ENCODE measurements at regions of chr7 and their contacts with region 1.

Region 1: DNA sequence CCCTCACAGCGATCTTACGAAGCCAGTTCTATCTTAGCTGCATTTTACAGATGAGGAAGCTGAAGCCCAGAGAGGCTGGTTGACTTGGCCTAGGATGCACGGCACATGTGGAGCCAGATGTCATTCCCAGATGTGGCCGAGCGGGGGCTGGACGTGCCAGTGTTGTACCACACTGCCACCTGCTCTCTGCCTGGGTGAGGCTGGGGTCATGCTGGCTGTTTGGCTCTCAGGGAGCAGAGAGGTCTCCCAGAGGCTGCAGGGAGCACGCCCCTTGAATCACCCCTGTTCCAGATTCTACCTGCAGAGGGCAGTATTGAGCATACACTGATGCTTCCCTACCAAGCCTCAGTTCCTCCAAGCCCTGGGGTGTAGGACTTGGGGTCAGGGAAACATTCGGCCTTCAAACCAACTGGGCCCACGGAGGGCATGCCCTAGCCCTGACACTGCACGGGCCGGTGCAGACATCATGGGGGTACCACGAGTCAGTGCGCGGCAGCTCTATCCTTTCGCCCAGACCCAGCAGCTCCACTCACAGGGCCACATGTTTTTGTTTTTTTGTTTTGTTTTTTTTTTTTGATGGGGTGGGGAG is 3.8 kb upstream of the GTF2IRD1 start:
- DNase-seq: peak; percentile 49
- ATAC-seq: peak; percentile 34

Region 2: DNA sequence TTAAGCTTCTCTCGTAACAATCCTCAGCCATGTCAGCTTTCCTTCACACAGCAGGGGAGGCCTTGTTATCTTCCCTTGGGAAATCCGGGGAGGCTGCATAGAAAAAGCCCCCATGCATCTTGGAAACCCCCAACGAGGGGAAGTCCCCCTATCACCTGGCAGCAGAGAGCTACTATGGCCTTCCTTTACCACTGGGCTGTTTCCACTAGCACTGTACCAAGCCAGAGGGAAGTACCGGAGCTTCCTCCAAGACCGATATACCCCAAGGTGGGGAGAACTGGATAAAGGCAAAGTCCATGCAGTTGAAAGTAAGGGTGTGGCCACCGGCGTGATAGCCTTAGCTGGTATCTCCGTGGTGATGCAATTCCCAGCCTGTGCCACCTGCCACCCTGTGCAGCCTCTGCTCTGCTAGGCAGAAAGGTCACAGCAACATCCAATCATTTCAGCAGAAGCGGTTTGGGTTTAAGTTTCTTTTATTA is 165.1 kb before region 1 on chr7:
- intact Hi-C with region 1: no loop called
- DNase-seq: no peak
- ATAC-seq: no peak

Region 3: GRCh38 chr7:74535951-74536356 is 86.1 kb after region 1 on chr7:
- intact Hi-C with region 1: loop called (anchors 10 kb)
- DNase-seq: no peak
- ATAC-seq: peak; percentile 62

Region 4: GRCh38 chr7:74575138-74575727 is 125.3 kb after region 1 on chr7:
- intact Hi-C with region 1: no loop called
- DNase-seq: no peak
- ATAC-seq: no peak

Measured in Right ventricle myocardium superior (tissue), 1 donor.